Endothelial cell of umbilical vein (primary cell): ENCODE measurements at regions of chr3 and their contacts with region 1.

Region 1: DNA sequence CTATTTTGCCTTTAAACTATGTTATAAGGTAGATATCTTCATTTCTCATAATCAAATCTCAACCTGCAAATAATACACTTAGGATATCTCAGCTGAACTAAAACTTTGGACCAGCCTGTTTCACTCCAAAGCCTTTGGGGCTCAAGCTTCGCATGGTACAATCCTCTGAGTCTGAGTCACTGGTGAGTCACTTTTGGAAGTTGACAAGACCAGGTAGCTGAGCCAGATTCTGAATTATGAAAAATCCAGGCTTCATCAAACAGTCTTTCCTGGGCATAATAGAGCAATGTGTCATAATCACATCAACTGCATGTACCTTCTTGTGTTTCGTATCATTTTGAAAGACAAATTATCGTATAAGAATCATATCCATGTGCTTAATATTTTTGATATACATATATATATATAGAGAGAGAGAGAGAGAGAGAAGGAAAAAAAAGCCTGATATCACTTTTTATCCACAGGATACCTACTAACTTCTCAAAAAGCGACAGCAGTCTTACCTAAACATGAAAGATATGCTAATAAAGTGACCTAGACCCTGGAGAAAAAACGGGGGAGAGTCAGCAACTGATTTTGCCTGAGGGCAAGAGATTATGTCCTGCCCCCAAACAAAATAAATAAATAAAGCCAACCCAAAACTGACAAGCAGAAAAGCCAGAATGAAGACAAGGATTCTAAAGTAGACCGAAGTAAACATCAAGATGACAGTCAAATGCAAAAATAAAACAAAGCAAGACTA is 263.9 kb upstream of the TGFBR2 start:
- DNase-seq: peak; percentile 94
- H3K4me3 ChIP-seq: peak overlapping the region in 1 of 3 experiments; percentile 32
- H3K27ac ChIP-seq: peak overlapping the region; percentile 98
- H3K4me1 ChIP-seq: peaks cover 62% of the 10 kb centered on the region
- H3K27me3 ChIP-seq: no peaks in the 10 kb centered on the region
- CTCF ChIP-seq: no peak
- POLR2A ChIP-seq: no peak

Region 2: GRCh38 chr3:30098653-30099455 is 243.6 kb before region 1 on chr3:
- CTCF ChIA-PET with region 1: no interaction called
- POLR2A ChIA-PET with region 1: no interaction called
- dilution Hi-C with region 1: no loop called
- intact Hi-C with region 1: no loop called
- DNase-seq: peak; percentile 14
- H3K4me3 ChIP-seq: no peak overlapping the region
- H3K27ac ChIP-seq: no peak overlapping the region
- H3K4me1 ChIP-seq: no peaks in the 10 kb centered on the region
- H3K27me3 ChIP-seq: no peaks in the 10 kb centered on the region
- CTCF ChIP-seq: no peak
- POLR2A ChIP-seq: no peak

Region 3: GRCh38 chr3:30112902-30113484 is 229.5 kb before region 1 on chr3:
- CTCF ChIA-PET with region 1: no interaction called
- POLR2A ChIA-PET with region 1: no interaction called
- dilution Hi-C with region 1: no loop called
- intact Hi-C with region 1: loop called (anchors 2 kb)
- DNase-seq: peak; percentile 76
- H3K4me3 ChIP-seq: no peak overlapping the region
- H3K27ac ChIP-seq: no peak overlapping the region
- H3K4me1 ChIP-seq: no peaks in the 10 kb centered on the region
- H3K27me3 ChIP-seq: peaks cover 0 to 2% of the 10 kb centered on the region in 2 experiments
- CTCF ChIP-seq: peak; percentile 26 to 37
- POLR2A ChIP-seq: no peak

Region 4: DNA sequence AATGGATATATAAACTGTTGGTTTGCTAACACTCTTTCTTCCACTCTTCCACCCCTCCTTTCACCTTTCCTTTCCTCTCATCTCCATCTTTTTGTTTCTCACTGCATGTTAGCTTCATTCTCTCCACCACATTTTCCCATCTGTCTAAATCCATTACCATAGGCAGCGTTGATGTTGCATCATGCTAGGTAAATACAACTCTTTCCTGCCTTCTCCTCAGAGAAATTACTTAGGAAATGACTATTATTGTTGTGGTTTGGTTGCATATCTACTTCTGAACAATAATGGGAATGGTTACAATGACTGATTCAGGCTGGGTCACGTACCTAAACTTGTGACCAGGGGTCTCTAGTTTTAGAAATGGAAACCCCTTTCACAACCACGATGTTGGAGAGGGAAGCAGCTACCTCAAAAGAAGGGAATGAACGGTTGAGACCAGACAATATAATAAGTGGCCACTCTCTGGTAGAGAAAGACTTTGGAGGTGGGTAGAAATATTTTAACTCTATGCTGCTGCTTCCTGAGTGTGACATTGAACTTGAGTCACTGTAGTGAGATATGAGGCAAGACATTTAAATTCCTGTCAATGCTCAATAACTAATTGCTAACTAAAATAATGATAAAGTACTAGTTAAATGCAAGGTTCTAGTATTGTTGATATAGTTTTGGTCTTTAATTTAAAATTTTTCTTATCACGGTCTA is 50.1 kb before region 1 on chr3:
- CTCF ChIA-PET with region 1: interaction called, 4 read pairs
- POLR2A ChIA-PET with region 1: interaction called, 3 read pairs
- dilution Hi-C with region 1: no loop called
- intact Hi-C with region 1: loop called (anchors 1 kb)
- DNase-seq: peak; percentile 93
- H3K4me3 ChIP-seq: peak overlapping the region in 1 of 3 experiments; percentile 44
- H3K27ac ChIP-seq: peak overlapping the region; percentile 99
- H3K4me1 ChIP-seq: peaks cover 63% of the 10 kb centered on the region
- H3K27me3 ChIP-seq: no peaks in the 10 kb centered on the region
- CTCF ChIP-seq: no peak
- POLR2A ChIP-seq: no peak

Region 5: GRCh38 chr3:30538787-30539186 is 196.3 kb after region 1 on chr3:
- CTCF ChIA-PET with region 1: no interaction called
- POLR2A ChIA-PET with region 1: interaction called, 3 read pairs
- dilution Hi-C with region 1: no loop called
- intact Hi-C with region 1: loop called (anchors 1 kb)
- DNase-seq: peak; percentile 93
- H3K4me3 ChIP-seq: no peak overlapping the region
- H3K27ac ChIP-seq: peak overlapping the region; percentile 97
- H3K4me1 ChIP-seq: peaks cover 26% of the 10 kb centered on the region
- H3K27me3 ChIP-seq: no peaks in the 10 kb centered on the region
- CTCF ChIP-seq: no peak
- POLR2A ChIP-seq: no peak

Region 6: DNA sequence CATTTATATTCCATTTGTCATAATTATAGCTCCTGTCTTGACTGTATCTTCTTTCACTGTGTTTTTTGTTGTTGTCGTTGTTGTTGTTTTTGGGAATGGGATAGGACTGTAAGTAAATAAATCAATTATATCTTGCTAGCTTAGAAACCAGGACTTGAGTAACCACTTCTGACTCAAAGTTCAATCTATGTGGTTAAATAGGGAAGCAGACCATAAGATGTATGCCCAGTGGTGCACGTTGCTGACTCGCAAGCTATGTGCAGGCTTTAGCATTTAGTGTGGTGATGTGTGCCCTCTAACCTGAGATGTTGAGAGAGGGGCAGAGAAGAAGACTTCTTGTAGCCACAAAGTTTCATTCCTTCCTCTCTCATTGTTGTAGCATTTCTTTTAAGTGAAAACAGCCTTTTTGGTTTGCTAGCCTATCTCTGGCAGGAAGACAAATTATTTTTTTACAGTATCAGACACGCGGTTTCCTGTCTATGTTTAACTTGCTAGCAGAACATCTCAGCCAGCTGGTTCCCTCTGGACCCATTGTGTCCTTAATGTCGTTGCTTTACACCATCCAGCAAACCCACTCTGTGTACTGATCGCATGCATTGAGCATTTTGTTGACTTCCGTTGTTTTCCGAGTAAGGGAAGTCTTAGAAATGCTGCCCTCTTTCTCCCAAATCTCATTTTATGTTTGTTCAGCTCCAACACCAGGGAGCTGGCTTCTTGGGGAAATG is 316.0 kb after region 1 on chr3:
- CTCF ChIA-PET with region 1: interaction called, 3 read pairs
- POLR2A ChIA-PET with region 1: no interaction called
- dilution Hi-C with region 1: no loop called
- intact Hi-C with region 1: loop called (anchors 1 kb)
- DNase-seq: peak; percentile 95
- H3K4me3 ChIP-seq: no peak overlapping the region
- H3K27ac ChIP-seq: peak overlapping the region; percentile 98
- H3K4me1 ChIP-seq: peaks cover 100% of the 10 kb centered on the region
- H3K27me3 ChIP-seq: no peaks in the 10 kb centered on the region
- CTCF ChIP-seq: no peak
- POLR2A ChIP-seq: peak; percentile 68